Upper lobe of right lung (tissue), 1 donor: ENCODE measurements at regions of chr17 and their contacts with region 1.

Region 1: GRCh38 chr17:43760254-43760852 is 1.8 kb upstream of the SOST start:
- DNase-seq: peak; percentile 93
- ATAC-seq: peak; percentile 98
- H3K4me3 ChIP-seq: no peak overlapping the region
- H3K27ac ChIP-seq: no peak overlapping the region
- H3K4me1 ChIP-seq: peaks cover 4% of the 10 kb centered on the region
- H3K27me3 ChIP-seq: peaks cover 11% of the 10 kb centered on the region
- CTCF ChIP-seq: peak; percentile 98

Region 2: DNA sequence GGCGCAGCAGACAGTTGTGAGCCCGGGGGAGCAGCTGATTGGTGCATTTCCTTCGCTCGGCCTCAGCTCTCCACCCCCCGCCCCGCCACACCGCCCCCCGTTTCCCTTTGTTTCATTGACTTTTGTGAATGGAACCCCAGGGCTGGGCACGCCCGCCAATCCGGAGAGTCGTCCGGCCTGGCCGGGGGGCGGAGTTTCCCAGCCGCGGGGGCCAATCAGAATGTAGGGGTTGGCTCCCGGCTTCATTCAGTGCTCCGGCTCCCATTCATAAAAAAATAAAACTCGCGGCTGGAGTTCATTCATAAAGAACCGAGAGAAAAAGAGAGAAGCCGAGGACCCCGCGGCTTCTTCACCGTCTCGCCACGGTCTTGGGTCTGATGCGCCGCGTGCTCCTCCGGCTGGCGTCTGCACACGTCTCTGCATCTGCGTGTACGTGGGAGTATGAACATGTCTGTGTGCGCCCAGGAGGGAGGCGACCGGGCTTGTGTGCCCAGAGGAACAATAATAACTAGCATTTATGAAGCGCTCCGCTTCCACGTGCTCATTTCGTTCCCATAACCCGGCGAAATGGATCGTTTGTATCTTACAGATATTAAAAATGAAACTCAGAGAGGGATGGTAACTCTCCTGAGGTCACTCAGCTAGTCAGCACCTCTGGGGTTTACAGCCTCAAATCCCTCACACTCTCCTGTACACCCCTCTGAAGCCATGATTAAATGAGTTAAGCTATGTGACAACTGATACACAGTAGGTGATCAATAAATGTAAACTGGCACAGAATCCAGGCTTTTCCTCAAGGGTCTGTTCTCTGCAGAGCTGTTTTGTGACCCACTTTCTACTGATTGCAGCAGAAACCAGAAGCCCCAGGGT is 213.8 kb before region 1 on chr17 and contains the start of gene ETV4:
- intact Hi-C with region 1: no loop called
- DNase-seq: peak; percentile 95
- ATAC-seq: peak; percentile 92
- H3K4me3 ChIP-seq: peak within 1 kb of the TSS; percentile 67
- H3K27ac ChIP-seq: no peak within 1 kb of the TSS
- H3K4me1 ChIP-seq: peaks cover 7% of the 10 kb centered on the region
- H3K27me3 ChIP-seq: peaks cover 11% of the 10 kb centered on the region
- CTCF ChIP-seq: no peak
- total RNA-seq, gene ETV4: 4.0 TPM

Region 3: GRCh38 chr17:43562679-43563599 is 197.4 kb before region 1 on chr17:
- intact Hi-C with region 1: loop called (anchors 10 kb)
- DNase-seq: no peak
- ATAC-seq: no peak
- H3K4me3 ChIP-seq: no peak overlapping the region
- H3K27ac ChIP-seq: no peak overlapping the region
- H3K4me1 ChIP-seq: peaks cover 10% of the 10 kb centered on the region
- H3K27me3 ChIP-seq: no peaks in the 10 kb centered on the region
- CTCF ChIP-seq: no peak

Region 4: DNA sequence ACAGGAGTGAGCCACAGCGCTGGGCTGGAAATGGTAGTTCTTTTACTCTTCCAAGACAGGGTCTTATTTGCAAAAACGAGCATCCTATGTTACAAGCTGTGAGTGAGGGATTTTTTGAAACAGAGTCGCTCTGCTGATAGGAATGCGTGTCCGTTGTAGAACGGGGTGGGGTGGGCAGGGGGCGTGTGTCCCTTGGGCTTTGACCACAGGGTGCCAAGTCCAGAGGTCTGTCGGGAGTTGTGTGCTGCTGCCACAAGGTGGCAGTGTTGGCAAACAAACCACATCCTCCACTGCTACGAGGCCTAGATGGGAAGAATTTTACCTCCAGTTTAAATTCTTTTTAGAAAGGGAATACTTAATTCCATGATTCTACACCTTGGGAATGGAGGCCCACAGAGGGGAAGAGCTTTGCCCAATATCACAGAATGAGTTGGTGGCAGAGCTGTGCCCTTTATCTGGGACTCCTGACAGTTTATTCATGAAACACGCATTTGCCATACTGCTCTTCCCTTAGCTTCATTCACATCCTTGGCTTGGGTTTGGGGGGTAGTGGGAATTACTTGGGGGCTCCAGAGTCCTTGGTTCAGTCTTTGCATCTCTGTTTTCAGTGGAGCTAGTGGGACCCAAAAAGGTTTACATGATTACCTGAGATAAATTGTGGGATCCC is 183.7 kb before region 1 on chr17:
- intact Hi-C with region 1: loop called (anchors 10 kb)
- DNase-seq: peak; percentile 76
- ATAC-seq: peak; percentile 87
- H3K4me3 ChIP-seq: no peak overlapping the region
- H3K27ac ChIP-seq: no peak overlapping the region
- H3K4me1 ChIP-seq: peaks cover 14% of the 10 kb centered on the region
- H3K27me3 ChIP-seq: no peaks in the 10 kb centered on the region
- CTCF ChIP-seq: peak; percentile 90

Region 5: DNA sequence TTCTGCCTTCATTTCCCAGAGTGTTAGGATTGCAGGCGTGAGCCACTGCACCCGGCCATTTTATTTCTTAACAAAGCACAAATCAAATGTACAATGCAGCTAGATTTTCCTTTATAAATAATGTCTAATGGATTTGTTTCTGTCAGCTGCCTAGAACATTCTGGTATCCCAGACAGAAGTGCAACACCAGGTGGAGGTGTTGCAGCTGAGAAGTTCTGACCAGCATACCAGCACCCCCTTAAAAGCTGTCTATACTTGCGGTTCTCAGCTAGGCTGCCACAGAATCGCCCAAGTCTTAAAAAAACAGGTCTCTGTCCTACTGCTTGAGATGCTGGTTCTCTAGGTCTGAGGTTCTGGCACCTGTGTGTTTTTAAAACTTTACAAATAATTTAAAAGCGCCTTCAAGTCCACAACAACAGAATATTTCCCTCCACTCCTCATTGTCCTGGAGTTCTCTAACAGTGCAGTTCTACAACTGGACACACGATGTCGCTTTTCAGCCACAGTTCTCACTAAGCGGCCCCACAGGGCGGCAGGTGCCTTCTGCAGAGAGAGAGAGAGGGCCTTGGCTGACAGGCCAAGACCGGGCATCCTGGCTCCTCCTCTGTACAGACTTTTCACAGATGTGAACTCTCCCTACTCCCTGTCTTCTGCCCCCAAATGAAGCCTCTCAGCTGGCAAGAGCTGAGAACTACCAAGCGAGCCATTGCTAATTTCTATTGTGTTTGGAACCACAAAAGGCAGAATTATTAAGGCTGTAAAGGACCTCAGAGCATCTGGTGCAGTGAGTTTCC is 66.1 kb before region 1 on chr17:
- intact Hi-C with region 1: loop called (anchors 5 kb)
- DNase-seq: peak; percentile 82
- ATAC-seq: peak; percentile 95
- H3K4me3 ChIP-seq: no peak overlapping the region
- H3K27ac ChIP-seq: no peak overlapping the region
- H3K4me1 ChIP-seq: peaks cover 14% of the 10 kb centered on the region
- H3K27me3 ChIP-seq: no peaks in the 10 kb centered on the region
- CTCF ChIP-seq: peak; percentile 96